ENCODE measurements at regions of chr16 and their contacts with region 1.

Region 1: GRCh38 chr16:21300309-21301167 is 22.4 kb upstream of the CRYM start:
- DNase-seq: peak; percentile 86
- H3K4me3 ChIP-seq: peak overlapping the region; percentile 71 to 93
- H3K27ac ChIP-seq: peak overlapping the region; percentile 35 to 66; a peak in 3 of 4 replicates
- H3K4me1 ChIP-seq: peaks cover 0 to 4% of the 10 kb centered on the region in 2 experiments; a peak in 1 of 4 replicates
- H3K27me3 ChIP-seq: no peaks in the 10 kb centered on the region
- CTCF ChIP-seq: peak; percentile 98
- EP300 ChIP-seq: peak in 1 of 2 experiments; percentile 73; a peak in 3 of 4 replicates
- RAD21 ChIP-seq: peak; percentile 99

Region 2: DNA sequence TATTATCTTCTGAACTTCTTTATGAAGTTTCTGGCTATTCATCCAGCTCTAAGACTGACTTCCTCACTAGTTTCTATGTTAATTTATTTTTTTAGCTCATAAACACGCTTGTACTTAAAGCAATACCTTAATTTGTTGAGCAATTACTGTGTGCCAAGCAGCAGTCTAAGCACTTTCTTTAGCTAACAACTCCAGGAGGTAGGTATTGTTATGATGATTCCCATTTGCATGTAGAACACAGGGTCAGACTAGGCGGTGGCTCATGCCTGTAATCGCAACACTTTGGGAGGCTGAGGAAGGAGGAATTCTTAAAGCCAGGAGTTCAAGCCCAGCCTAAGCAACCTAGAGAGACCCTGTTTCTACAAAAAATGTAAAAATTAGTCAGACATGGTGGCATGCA is 169.7 kb before region 1 on chr16:
- CTCF ChIA-PET with region 1: no interaction called
- POLR2A ChIA-PET with region 1: no interaction called
- DNase-seq: no peak
- H3K4me3 ChIP-seq: no peak overlapping the region
- H3K27ac ChIP-seq: no peak overlapping the region
- H3K4me1 ChIP-seq: no peaks in the 10 kb centered on the region
- H3K27me3 ChIP-seq: peaks cover 7% of the 10 kb centered on the region; the same call in 1 of the 2 replicates
- CTCF ChIP-seq: no peak
- EP300 ChIP-seq: no peak
- RAD21 ChIP-seq: no peak

Region 3: GRCh38 chr16:21184834-21185233 is 115.7 kb before region 1 on chr16:
- CTCF ChIA-PET with region 1: interaction called, 169 read pairs
- POLR2A ChIA-PET with region 1: interaction called, 3 read pairs
- DNase-seq: no peak
- H3K4me3 ChIP-seq: no peak overlapping the region
- H3K27ac ChIP-seq: no peak overlapping the region
- H3K4me1 ChIP-seq: no peaks in the 10 kb centered on the region; a peak in 1 of 4 replicates
- H3K27me3 ChIP-seq: no peaks in the 10 kb centered on the region
- CTCF ChIP-seq: no peak
- EP300 ChIP-seq: no peak
- RAD21 ChIP-seq: no peak

Region 4: DNA sequence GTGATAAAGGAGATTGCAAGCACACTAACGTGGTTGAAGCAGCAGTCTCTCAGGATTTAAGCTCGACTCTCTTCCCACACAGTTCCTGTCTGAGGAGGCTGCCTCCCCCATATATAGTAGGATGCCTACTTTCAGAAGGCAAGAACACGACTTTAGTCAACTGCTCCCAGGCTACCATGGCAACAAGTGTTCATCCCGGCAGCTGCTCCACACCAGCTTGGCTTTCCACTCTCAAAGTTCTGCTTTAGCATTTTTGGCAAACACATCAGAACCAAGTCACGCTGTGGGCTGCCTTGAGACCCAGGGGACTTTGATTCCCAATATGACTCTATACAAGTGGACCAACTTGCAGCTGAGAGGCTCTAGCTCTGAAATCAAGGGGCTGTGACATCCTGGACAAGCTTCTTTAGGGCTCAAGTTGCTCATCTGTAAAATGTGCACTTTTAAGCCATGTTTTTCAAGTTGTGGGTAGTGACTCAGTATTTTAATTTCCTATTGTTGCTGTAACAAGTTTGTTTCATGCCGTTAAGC is 105.7 kb before region 1 on chr16:
- CTCF ChIA-PET with region 1: interaction called, 169 read pairs
- POLR2A ChIA-PET with region 1: interaction called, 4 read pairs
- DNase-seq: no peak
- H3K4me3 ChIP-seq: no peak overlapping the region
- H3K27ac ChIP-seq: no peak overlapping the region
- H3K4me1 ChIP-seq: no peaks in the 10 kb centered on the region; a peak in 1 of 4 replicates
- H3K27me3 ChIP-seq: no peaks in the 10 kb centered on the region; the same call in 1 of the 2 replicates
- CTCF ChIP-seq: no peak
- EP300 ChIP-seq: no peak
- RAD21 ChIP-seq: no peak

Region 5: DNA sequence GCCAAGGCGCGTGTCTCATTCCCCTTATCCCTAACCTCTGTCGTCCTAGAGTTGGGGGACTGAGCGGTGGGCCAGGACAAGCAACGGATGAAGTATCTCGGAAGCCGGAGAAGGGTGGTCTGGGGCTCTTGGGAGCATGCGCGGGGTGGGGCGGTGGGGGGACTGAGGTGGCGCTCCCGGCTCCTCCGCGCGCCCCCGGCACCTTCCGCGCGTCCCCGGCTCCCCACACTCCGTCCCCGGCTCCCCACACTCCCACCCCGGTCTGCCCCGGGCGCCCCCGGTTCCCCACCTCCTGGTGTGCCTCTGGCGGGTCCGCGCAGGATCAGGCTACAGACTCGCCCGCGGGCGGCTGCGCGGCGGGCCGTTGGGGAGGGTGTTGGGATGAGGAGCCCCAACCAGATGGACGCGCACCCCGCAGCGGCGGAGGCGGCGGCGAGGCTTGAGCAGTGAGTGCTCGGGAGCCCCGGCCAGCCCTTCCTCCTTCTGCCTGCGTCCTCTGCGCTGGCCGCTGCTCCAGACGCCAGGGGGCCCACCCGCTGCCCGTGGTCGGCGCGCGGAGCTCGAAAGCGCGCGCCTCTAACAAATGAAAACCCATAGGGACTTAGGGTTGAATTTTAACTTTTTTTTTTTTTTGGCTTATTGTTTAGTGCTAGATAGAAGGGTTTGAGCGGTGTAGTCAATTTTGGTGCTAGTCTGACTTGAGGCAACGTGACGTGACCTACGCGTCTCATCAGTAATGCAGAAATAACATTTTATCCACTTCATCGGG is 16.8 kb before region 1 on chr16:
- CTCF ChIA-PET with region 1: interaction called, 71 read pairs
- POLR2A ChIA-PET with region 1: no interaction called
- DNase-seq: peak; percentile 92
- H3K4me3 ChIP-seq: peak overlapping the region; percentile 52 to 60
- H3K27ac ChIP-seq: peak overlapping the region in 1 of 2 experiments; percentile 36; a peak in 1 of 4 replicates
- H3K4me1 ChIP-seq: no peaks in the 10 kb centered on the region
- H3K27me3 ChIP-seq: peaks cover 24% of the 10 kb centered on the region; the same call in 1 of the 2 replicates
- CTCF ChIP-seq: peak; percentile 57
- EP300 ChIP-seq: no peak
- RAD21 ChIP-seq: peak; percentile 49

Region 6: GRCh38 chr16:21339941-21340340 is 39.4 kb after region 1 on chr16:
- CTCF ChIA-PET with region 1: no interaction called
- POLR2A ChIA-PET with region 1: no interaction called
- DNase-seq: no peak
- H3K4me3 ChIP-seq: no peak overlapping the region
- H3K27ac ChIP-seq: no peak overlapping the region
- H3K4me1 ChIP-seq: no peaks in the 10 kb centered on the region
- H3K27me3 ChIP-seq: no peaks in the 10 kb centered on the region
- CTCF ChIP-seq: no peak
- EP300 ChIP-seq: no peak
- RAD21 ChIP-seq: no peak